ENCODE measurements at regions of chr1 and their contacts with region 1.

Region 1: GRCh38 chr1:9181176-9181906 is 52.4 kb upstream of the GPR157 start:
- DNase-seq: peak; percentile 77
- H3K4me3 Mint-ChIP-seq: peak overlapping the region; percentile 81
- H3K27ac Mint-ChIP-seq: peak overlapping the region; percentile 69
- H3K4me1 Mint-ChIP-seq: peaks cover 27% of the 10 kb centered on the region
- H3K27me3 Mint-ChIP-seq: peaks cover 7% of the 10 kb centered on the region

Region 2: GRCh38 chr1:9110669-9111356 is 70.5 kb before region 1 on chr1:
- CTCF ChIA-PET with region 1: interaction called, 10 read pairs
- POLR2A ChIA-PET with region 1: no interaction called
- DNase-seq: peak; percentile 87
- H3K4me3 Mint-ChIP-seq: no peak overlapping the region
- H3K27ac Mint-ChIP-seq: no peak overlapping the region
- H3K4me1 Mint-ChIP-seq: peaks cover 28% of the 10 kb centered on the region
- H3K27me3 Mint-ChIP-seq: no peaks in the 10 kb centered on the region

Region 3: DNA sequence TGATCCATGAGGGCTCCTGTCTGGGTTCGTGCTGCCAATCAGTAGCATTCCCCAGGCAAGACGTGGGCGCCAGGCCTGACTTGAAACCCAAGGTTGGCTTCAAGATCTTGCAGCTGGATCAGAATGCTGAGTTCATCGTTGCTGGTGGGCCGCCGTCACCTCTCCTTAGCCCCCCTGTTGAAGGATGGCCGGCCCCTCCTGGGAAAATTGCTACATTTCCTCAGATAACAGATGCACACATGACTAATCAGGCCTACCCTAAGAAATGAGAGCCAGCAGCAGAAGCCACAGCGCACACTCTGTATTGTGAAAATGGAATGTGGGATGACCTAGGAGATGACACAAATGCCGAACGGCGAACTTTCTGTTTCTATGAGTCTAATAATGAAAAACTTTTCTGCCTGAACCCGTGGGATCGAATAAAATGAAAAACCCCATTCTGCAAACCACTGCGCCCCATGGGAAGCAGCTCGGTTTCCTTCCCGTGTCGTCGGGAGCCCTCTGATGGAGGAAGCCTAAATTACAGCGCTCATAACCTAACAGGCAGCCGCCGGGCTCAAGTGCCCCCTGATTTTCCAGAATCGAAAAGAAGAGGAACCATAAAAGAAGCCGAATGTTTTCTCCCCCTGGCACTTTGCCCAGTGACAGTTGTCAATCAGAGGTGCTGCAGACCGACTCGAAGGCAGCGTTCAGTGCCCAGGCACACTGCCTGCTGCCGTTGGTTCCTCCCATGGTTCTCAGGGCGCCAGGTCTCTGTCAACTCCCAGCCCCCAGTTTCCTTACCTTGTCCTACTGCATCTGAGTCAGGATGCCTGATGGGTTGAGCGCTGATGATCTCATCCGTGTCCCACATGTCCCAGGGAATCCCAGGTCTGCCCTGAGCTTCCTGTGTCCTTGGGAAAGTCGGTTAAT is 15.0 kb after region 1 on chr1:
- CTCF ChIA-PET with region 1: interaction called, 10 read pairs
- POLR2A ChIA-PET with region 1: interaction called, 4 read pairs
- DNase-seq: peak; percentile 64
- H3K4me3 Mint-ChIP-seq: no peak overlapping the region
- H3K27ac Mint-ChIP-seq: no peak overlapping the region
- H3K4me1 Mint-ChIP-seq: peaks cover 26% of the 10 kb centered on the region
- H3K27me3 Mint-ChIP-seq: peaks cover 56% of the 10 kb centered on the region

Region 4: GRCh38 chr1:9234223-9235095 is 53.1 kb after region 1 on chr1 and contains the start of gene H6PD:
- CTCF ChIA-PET with region 1: interaction called, 17 read pairs
- POLR2A ChIA-PET with region 1: no interaction called
- DNase-seq: peak; percentile 80
- H3K4me3 Mint-ChIP-seq: peak within 1 kb of the TSS; percentile 91
- H3K27ac Mint-ChIP-seq: peak within 1 kb of the TSS; percentile 90
- H3K4me1 Mint-ChIP-seq: peaks cover 42% of the 10 kb centered on the region
- H3K27me3 Mint-ChIP-seq: peaks cover 1% of the 10 kb centered on the region
- total RNA-seq, gene H6PD: 12.9 to 13.2 TPM